Panc1 (cell line): ENCODE measurements at regions of chr6 and their contacts with region 1.

Region 1: GRCh38 chr6:16183187-16183664 is 54.3 kb downstream of the MYLIP start:
- DNase-seq: no peak
- ATAC-seq: no peak
- H3K4me3 ChIP-seq: no peak overlapping the region
- H3K27ac ChIP-seq: no peak overlapping the region
- H3K4me1 ChIP-seq: peaks cover 4% of the 10 kb centered on the region; the same call in 1 of the 2 replicates
- H3K27me3 ChIP-seq: peaks cover 2% of the 10 kb centered on the region
- CTCF ChIP-seq: peak; percentile 73

Region 2: GRCh38 chr6:15691250-15691869 is 491.9 kb before region 1 on chr6:
- CTCF ChIA-PET with region 1: interaction called, 29 read pairs
- POLR2A ChIA-PET with region 1: no interaction called
- in situ Hi-C with region 1: no loop called
- intact Hi-C with region 1: loop called (anchors 1 kb)
- DNase-seq: peak; percentile 75
- ATAC-seq: peak; percentile 100
- H3K4me3 ChIP-seq: peak overlapping the region; percentile 37 to 64
- H3K27ac ChIP-seq: peak overlapping the region; percentile 58; the same call in 1 of the 2 replicates
- H3K4me1 ChIP-seq: peaks cover 3% of the 10 kb centered on the region; the same call in 1 of the 2 replicates
- H3K27me3 ChIP-seq: peaks cover under 1% of the 10 kb centered on the region; the same call in 1 of the 2 replicates
- CTCF ChIP-seq: peak; percentile 100

Region 3: DNA sequence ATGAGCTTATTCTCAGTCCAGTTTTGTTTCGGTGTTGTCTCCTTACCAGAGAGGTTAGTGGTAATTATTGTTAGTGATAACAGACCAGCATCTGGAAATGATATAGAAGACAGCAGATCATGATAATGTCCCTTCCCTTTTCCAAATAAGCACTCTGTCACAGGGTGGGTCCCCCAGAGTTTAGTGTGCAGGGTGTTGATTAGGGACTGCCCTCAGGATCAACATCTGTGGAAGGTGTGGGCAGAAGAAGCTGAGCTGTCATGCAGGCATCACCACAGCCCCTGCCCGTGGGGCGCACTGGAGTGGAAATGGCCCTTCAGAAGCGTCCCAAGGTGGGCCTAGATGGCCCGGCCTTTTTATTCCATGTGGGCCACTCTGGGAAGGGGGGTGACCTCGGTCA is 452.8 kb before region 1 on chr6:
- CTCF ChIA-PET with region 1: interaction called, 12 read pairs
- POLR2A ChIA-PET with region 1: no interaction called
- in situ Hi-C with region 1: no loop called
- intact Hi-C with region 1: no loop called
- DNase-seq: no peak
- ATAC-seq: no peak
- H3K4me3 ChIP-seq: no peak overlapping the region
- H3K27ac ChIP-seq: no peak overlapping the region
- H3K4me1 ChIP-seq: no peaks in the 10 kb centered on the region
- H3K27me3 ChIP-seq: peaks cover 6% of the 10 kb centered on the region; the same call in 1 of the 2 replicates
- CTCF ChIP-seq: no peak

Region 4: GRCh38 chr6:16162863-16163465 is 20.3 kb before region 1 on chr6:
- CTCF ChIA-PET with region 1: no interaction called
- POLR2A ChIA-PET with region 1: interaction called, 13 read pairs
- in situ Hi-C with region 1: no loop called
- intact Hi-C with region 1: no loop called
- DNase-seq: no peak
- ATAC-seq: no peak
- H3K4me3 ChIP-seq: no peak overlapping the region
- H3K27ac ChIP-seq: no peak overlapping the region
- H3K4me1 ChIP-seq: no peaks in the 10 kb centered on the region
- H3K27me3 ChIP-seq: peaks cover 16% of the 10 kb centered on the region; the same call in 1 of the 2 replicates
- CTCF ChIP-seq: no peak